CD4-positive, alpha-beta memory T cell (primary cell): ENCODE measurements at regions of chr14 and their contacts with region 1.

Region 1: GRCh38 chr14:89589400-89590118 is 172.5 kb upstream of the FOXN3 start:
- DNase-seq: no peak
- H3K4me3 ChIP-seq: no peak overlapping the region
- H3K4me3 Mint-ChIP-seq: peak overlapping the region in 1 of 8 donors; percentile 29
- H3K27ac ChIP-seq: no peak overlapping the region
- H3K27ac Mint-ChIP-seq: peak overlapping the region in 3 of 7 donors; percentile 33 to 79 (median 46)
- H3K4me1 ChIP-seq: peaks cover 22% of the 10 kb centered on the region
- H3K4me1 Mint-ChIP-seq: peaks cover 52 to 84% (median 66%) of the 10 kb centered on the region in 4 donors
- H3K27me3 ChIP-seq: no peaks in the 10 kb centered on the region
- H3K27me3 Mint-ChIP-seq: no peaks in the 10 kb centered on the region

Region 2: GRCh38 chr14:89309670-89310177 is 279.8 kb before region 1 on chr14:
- CTCF ChIA-PET with region 1: no interaction called
- POLR2A ChIA-PET with region 1: no interaction called
- intact Hi-C with region 1: loop called (anchors 5 kb)
- DNase-seq: no peak
- H3K4me3 ChIP-seq: no peak overlapping the region
- H3K4me3 Mint-ChIP-seq: no peak overlapping the region
- H3K27ac ChIP-seq: no peak overlapping the region
- H3K27ac Mint-ChIP-seq: no peak overlapping the region
- H3K4me1 ChIP-seq: peaks cover 10% of the 10 kb centered on the region
- H3K4me1 Mint-ChIP-seq: peaks cover 26 to 59% (median 37%) of the 10 kb centered on the region in 4 donors
- H3K27me3 ChIP-seq: no peaks in the 10 kb centered on the region
- H3K27me3 Mint-ChIP-seq: no peaks in the 10 kb centered on the region